GM18951 (cell line): ENCODE measurements at regions of chr18 and their contacts with region 1.

Region 1: GRCh38 chr18:63320046-63320689 is 599 bp upstream of the BCL2 start:
- POLR2A ChIP-seq: peak; percentile 62

Region 2: GRCh38 chr18:62925031-62925688 is 395.0 kb before region 1 on chr18:
- in situ Hi-C with region 1: no loop called
- POLR2A ChIP-seq: no peak

Region 3: DNA sequence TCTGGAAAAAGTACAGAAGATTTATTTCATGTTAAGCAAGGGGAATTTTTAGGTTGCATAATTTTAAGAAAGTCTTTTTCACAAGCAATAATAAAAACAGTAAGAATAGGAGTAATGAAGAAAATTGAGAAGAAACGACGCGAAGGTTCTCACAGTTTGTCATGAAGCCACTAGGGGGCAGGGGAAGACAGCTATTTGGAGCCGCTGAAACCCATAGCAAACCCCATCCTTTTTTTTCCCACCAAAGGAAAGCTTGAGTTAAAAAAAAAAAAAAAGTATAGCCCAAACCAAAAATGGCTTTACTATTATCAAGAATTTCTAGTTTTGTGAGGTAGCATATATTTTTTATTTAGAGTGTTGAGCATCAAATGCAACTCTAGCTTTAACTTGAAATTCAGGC is 303.9 kb before region 1 on chr18:
- in situ Hi-C with region 1: loop called (anchors 5 kb)
- POLR2A ChIP-seq: no peak

Region 4: DNA sequence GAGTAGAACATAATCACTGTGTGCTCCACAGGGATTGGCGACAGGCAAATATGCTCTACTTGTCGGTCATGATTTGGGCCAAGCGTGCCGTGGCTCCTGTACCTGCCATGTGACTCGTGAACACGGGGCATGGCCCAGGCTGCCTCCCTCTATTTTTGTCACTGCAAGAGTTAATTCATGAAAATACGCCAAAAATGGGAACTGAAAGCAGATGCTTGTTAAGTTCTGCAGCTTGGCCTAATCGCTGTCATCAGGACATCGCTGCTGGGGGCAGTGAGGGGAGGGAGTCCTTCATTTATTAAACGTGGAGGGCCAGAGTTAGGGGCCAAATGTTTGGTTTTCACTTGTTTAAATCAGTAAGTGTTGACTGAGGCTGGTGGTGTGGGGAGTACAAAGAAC is 178.4 kb before region 1 on chr18:
- in situ Hi-C with region 1: loop called (anchors 5 kb)
- POLR2A ChIP-seq: no peak

Region 5: DNA sequence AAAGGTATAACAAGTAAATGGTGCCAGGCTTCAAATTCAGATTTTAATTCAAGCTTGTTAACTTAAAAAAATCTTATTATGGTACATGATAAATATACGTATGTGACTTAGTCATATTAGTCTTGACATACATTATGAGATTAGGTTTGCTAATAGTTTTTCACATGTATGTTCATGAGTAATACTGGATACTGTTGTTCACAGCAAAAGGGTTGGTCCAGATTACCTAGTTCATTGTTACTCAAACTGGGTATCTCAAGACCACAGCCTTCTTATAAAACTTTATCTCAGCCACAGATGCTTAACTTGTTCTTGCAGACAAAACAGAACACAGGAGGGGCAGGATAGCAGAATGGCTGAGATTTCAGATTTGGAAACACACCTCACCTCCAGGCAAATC is 75.3 kb after region 1 on chr18:
- in situ Hi-C with region 1: no loop called
- POLR2A ChIP-seq: no peak

Region 6: GRCh38 chr18:63648241-63648640 is 328.1 kb after region 1 on chr18:
- in situ Hi-C with region 1: no loop called
- POLR2A ChIP-seq: no peak

Region 7: DNA sequence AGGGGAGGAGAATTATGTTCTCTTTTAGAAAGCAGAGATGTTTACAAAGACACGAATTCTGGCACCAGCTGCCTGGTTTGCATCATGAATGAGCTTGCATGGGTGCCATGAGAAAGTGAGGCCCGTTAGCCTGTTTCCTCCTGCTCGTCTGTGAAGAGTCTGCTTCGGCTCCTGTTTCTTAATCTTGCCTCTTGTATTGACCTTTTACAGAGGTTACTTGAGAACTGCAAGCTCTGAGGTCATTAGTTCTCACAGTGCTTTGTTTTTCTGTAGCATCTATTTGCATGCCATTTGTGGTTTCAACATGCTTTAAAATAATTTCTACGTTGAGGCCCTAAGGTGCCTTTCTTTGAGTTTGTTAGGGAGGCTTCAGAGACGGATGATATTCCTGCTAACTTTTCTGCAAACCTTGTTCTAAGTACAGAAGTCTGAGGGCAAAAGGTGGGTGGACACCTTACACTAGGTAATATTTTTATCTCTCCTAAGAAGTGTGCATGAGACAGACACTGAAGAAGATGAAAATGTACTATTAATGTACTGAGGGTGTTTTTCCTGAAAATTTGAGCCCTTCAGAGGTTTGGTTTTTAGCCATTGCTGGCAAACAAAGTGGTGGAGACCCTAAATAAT is 882.2 kb after region 1 on chr18:
- in situ Hi-C with region 1: no loop called
- POLR2A ChIP-seq: no peak